CD8-positive, alpha-beta T cell (primary cell): ENCODE measurements at regions of chr5 and their contacts with region 1.

Region 1: DNA sequence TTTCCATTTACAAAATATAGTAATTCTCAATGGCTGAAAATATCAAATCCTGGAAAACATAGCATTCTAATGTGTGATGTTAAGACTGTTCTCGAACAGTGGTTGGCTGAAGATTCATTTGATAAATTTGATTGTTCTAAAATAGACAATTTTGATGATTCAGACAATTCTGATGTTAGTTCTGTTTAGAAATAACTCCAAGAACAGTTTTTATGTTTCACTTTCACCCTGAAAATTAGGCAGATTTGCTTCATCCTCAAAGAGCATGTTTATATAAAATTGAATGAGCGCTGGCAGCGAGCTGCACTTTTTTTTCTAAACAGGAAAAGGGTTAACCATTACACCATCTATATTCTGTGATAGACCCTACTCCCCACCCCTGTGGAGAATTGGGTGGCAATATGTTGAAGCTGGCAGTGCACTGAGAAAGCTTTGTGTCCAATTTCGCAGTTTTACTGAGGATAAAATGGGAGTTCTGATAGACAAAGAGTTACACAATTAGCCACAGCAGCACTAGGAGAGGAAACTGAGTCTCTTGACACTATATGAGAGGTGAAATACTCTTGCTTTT is 69.6 kb upstream of the TMED7 start:
- DNase-seq: no peak
- ATAC-seq: no peak
- H3K4me3 ChIP-seq: no peak overlapping the region
- H3K4me3 Mint-ChIP-seq: no peak overlapping the region
- H3K27ac ChIP-seq: no peak overlapping the region
- H3K27ac Mint-ChIP-seq: no peak overlapping the region
- H3K4me1 ChIP-seq: no peaks in the 10 kb centered on the region
- H3K4me1 Mint-ChIP-seq: no peaks in the 10 kb centered on the region
- H3K27me3 ChIP-seq: no peaks in the 10 kb centered on the region
- H3K27me3 Mint-ChIP-seq: peaks cover 13% of the 10 kb centered on the region
- CTCF ChIP-seq: no peak

Region 2: DNA sequence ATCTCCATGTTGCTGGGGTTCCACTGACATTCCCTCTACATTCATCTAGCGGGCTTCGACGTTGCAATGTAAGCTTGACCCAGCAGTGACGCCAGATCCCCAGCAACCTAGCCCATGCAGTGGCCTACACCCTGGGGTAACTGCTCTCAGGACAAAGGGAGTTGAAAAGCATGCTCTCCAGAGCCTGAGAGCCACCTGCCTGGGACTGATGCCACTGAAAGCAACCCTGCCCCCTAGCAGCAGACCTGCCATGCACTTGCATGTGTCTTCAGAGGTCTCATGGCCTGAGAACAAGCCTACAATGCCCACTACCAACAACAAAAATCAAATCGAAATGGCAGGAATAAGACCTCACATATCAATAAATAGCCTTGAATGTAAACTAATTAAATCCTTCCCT is 856.0 kb before region 1 on chr5:
- CTCF ChIA-PET with region 1: no interaction called
- POLR2A ChIA-PET with region 1: no interaction called
- intact Hi-C with region 1: loop called in 1 of 2 experiments (anchors 10 kb)
- DNase-seq: no peak
- ATAC-seq: no peak
- H3K4me3 ChIP-seq: no peak overlapping the region
- H3K4me3 Mint-ChIP-seq: no peak overlapping the region
- H3K27ac ChIP-seq: no peak overlapping the region
- H3K27ac Mint-ChIP-seq: no peak overlapping the region
- H3K4me1 ChIP-seq: no peaks in the 10 kb centered on the region
- H3K4me1 Mint-ChIP-seq: no peaks in the 10 kb centered on the region
- H3K27me3 ChIP-seq: no peaks in the 10 kb centered on the region
- H3K27me3 Mint-ChIP-seq: no peaks in the 10 kb centered on the region
- CTCF ChIP-seq: no peak